CD4-positive, alpha-beta T cell (primary cell): ENCODE measurements at regions of chr6 and their contacts with region 1.

Region 1: DNA sequence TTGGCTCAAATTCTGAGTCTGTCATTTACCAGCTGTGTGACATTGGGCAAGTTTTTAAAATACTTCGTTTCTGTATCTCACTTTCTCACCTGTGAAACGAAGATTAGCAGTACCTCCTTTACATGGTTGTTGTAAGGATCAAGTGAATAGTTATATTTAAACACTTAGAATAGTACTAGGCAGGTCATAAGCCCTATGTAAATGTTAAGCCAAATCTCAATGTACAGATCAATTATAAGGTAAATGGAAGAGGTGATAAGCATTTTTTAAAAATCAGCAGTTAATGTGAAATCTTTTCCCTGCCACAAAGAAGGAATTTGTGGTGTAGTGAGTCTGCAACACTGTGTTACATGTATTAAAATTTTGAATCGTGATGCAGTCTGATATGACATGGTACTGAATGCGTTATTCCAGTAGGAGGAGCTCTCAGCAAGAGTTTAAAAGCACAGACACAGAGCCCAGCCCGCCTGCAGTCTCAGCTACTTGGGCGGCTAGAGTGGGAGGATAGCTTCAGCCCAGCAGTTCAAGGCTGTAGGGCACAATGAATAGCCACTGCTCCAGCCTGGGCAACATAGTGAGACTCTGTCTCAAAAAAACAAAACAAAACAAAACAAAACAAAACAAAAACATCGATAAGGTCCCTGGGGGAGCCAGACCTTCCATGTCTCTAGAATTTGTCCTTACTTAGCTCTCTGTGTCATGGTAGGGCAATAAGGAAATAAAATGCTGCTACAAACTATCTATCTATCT is 46.0 kb downstream of the GTF2H5 start:
- DNase-seq: peak; percentile 26 to 81 (median 37)
- ATAC-seq: peak; percentile 97
- H3K4me3 ChIP-seq: no peak overlapping the region
- H3K4me3 Mint-ChIP-seq: no peak overlapping the region
- H3K27ac ChIP-seq: no peak overlapping the region
- H3K27ac Mint-ChIP-seq: no peak overlapping the region
- H3K4me1 ChIP-seq: no peaks in the 10 kb centered on the region
- H3K4me1 Mint-ChIP-seq: peaks cover under 1% of the 10 kb centered on the region
- H3K27me3 ChIP-seq: no peaks in the 10 kb centered on the region
- H3K27me3 Mint-ChIP-seq: peaks cover under 1% of the 10 kb centered on the region
- CTCF ChIP-seq: peak; percentile 79

Region 2: GRCh38 chr6:158605266-158605878 is 391.3 kb after region 1 on chr6:
- CTCF ChIA-PET with region 1: interaction called, 10 read pairs
- POLR2A ChIA-PET with region 1: no interaction called
- intact Hi-C with region 1: loop called in 1 of 2 experiments (anchors 1 kb)
- DNase-seq: peak; percentile 30 to 75 (median 52)
- ATAC-seq: peak; percentile 85
- H3K4me3 ChIP-seq: no peak overlapping the region
- H3K4me3 Mint-ChIP-seq: no peak overlapping the region
- H3K27ac ChIP-seq: no peak overlapping the region
- H3K27ac Mint-ChIP-seq: peak overlapping the region; percentile 39
- H3K4me1 ChIP-seq: no peaks in the 10 kb centered on the region
- H3K4me1 Mint-ChIP-seq: peaks cover 5% of the 10 kb centered on the region
- H3K27me3 ChIP-seq: no peaks in the 10 kb centered on the region
- H3K27me3 Mint-ChIP-seq: no peaks in the 10 kb centered on the region
- CTCF ChIP-seq: peak; percentile 70

Region 3: DNA sequence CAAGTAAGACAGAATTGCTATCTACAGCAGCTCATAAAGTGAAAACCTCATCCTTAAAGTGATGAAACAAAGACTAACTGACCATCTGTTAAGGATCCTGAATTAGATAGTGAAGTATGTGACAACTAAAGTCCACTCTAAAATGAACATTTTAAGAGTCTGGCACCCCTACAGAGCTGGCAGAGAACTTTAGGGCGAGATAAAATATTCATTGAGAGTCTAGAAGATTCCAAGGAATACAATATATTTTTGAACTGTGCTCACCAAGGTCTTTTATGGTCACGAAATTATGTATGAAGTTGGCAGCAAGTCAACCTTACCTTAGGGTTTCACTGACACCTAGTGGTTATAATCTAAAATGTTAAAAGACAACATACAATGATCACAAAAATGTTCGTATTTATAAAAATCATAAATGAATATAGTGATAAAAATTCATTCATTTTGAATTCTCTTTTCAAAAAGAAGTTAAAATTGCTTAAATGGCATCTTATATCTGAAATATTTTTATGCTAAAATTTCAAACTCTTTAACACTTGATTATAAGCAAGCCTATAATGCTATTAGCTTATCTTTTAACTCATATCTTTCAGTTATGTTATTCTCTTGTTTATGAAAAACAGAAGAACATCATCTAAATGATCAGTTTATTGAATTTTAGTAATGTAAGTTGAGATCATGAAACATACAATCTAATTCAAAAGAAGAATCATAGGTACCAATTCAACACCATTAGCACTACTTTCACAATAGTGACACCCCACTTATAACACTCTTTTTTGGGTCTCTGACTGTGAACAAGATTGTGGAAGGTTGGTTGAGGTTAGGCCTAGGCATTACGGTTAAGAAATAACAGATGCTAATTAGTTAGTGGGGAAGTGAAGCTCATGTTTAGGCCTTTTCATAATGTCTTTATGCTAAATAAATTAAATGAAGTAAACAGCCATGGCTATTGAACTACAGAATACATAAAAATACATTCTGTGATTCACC is 758.4 kb after region 1 on chr6:
- CTCF ChIA-PET with region 1: no interaction called
- POLR2A ChIA-PET with region 1: no interaction called
- intact Hi-C with region 1: loop called in 1 of 2 experiments (anchors 5 kb)
- DNase-seq: peak in 3 of 14 experiments; percentile 70 to 78 (median 78)
- ATAC-seq: peak; percentile 61
- H3K4me3 ChIP-seq: no peak overlapping the region
- H3K4me3 Mint-ChIP-seq: no peak overlapping the region
- H3K27ac ChIP-seq: no peak overlapping the region
- H3K27ac Mint-ChIP-seq: no peak overlapping the region
- H3K4me1 ChIP-seq: no peaks in the 10 kb centered on the region
- H3K4me1 Mint-ChIP-seq: peaks cover 4% of the 10 kb centered on the region
- H3K27me3 ChIP-seq: no peaks in the 10 kb centered on the region
- H3K27me3 Mint-ChIP-seq: no peaks in the 10 kb centered on the region
- CTCF ChIP-seq: peak; percentile 88

Region 4: DNA sequence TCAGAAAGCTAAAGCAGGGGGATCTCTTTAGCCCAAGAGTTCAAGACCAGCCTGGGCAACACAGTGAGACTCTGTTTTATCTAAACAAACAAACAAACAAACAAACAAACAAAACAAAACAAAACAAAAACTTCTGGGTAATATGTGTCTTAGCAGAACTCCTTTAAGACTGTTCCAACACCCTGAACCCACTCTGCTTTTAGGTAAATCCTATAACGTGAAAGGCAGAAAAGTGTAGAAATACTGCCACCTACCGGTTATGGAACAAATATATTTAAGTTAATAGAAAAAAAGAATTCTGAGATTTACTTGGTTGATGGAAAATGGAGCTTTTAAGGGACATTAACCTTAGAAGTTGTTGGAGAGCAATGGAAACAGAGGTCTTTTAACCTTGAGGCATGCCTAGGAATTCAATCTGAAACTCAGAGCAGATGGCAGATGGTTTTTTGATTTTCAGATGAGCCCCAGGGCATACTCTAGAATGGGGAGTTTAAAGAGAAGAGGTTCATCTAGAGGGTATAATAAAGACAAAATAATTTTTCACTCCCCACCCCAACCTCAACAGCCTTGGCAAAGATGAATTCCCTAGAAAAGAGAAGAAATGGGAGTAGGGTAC is 1440.5 kb after region 1 on chr6:
- CTCF ChIA-PET with region 1: no interaction called
- POLR2A ChIA-PET with region 1: no interaction called
- intact Hi-C with region 1: loop called in 1 of 2 experiments (anchors 10 kb)
- DNase-seq: peak in 3 of 14 experiments; percentile 59 to 69 (median 65)
- ATAC-seq: no peak
- H3K4me3 ChIP-seq: no peak overlapping the region
- H3K4me3 Mint-ChIP-seq: no peak overlapping the region
- H3K27ac ChIP-seq: no peak overlapping the region
- H3K27ac Mint-ChIP-seq: no peak overlapping the region
- H3K4me1 ChIP-seq: no peaks in the 10 kb centered on the region
- H3K4me1 Mint-ChIP-seq: no peaks in the 10 kb centered on the region
- H3K27me3 ChIP-seq: no peaks in the 10 kb centered on the region
- H3K27me3 Mint-ChIP-seq: no peaks in the 10 kb centered on the region
- CTCF ChIP-seq: peak; percentile 79